PC-9 (cell line): ENCODE measurements at regions of chr15 and their contacts with region 1.

Region 1: DNA sequence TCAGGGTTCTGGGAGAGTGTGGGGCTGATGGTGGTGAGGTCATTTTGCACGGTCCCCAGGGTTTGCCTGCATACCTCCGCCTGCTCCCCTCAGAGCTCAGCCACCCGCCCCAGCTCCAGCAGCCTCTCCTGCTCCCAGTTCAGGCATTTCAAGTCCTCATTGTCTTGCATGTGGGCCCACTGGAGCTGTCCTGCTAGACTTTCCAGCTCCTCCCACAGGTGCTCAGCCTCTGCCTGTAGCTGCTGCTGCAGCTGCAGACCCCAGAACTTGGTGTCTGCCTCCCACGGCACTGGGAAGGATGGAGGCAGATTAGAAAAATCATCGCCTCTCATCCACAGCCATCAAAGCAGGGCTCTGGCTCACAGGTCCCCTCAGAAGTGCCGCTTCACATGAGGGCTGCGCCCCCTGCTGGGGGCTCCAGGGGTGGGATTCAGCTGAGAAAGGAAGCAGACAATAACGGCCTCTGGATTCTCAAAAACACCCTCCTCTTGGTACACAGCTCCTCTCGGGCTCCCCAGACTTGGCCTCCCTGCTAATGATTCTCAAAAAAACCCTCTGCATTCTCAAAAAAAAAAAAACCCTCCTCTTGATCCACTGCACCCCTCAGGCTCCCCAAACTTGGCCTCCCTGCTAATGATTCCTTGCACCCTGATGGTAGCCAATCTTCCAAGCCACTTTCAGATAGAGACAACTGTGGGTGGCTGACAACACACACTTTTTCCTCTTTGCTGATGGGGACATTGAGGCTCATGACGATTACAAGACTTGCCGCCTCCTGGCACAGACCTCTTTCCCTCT is 89.3 kb upstream of the C2CD4B start:
- DNase-seq: peak in 1 of 2 experiments; percentile 63
- H3K4me3 ChIP-seq: no peak overlapping the region
- H3K27ac ChIP-seq: no peak overlapping the region
- H3K4me1 ChIP-seq: no peaks in the 10 kb centered on the region
- H3K27me3 ChIP-seq: no peaks in the 10 kb centered on the region
- CTCF ChIP-seq: peak; percentile 76

Region 2: DNA sequence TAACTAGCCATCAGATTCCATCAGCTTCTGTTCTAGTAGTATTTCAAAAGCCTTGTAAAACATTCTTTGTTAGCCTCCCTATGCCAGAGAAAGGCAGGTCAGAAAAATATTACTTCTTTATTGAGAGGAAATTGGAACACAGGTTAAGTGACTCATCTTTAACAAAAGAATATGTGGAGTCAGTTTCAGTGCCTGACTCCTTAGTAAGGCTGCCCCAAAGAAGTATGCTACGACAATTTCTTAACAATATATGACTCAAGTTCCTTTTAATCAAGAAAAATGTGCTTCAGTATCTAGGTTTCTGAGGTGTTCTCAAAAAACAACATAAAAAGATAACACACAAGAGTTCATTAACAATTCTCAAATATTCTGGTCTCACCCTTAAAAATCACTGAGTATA is 333.2 kb before region 1 on chr15:
- CTCF ChIA-PET with region 1: no interaction called
- POLR2A ChIA-PET with region 1: no interaction called
- intact Hi-C with region 1: loop called (anchors 5 kb)
- DNase-seq: peak in 1 of 2 experiments; percentile 37
- H3K4me3 ChIP-seq: no peak overlapping the region
- H3K27ac ChIP-seq: peak overlapping the region; percentile 26; the same call in 1 of the 2 replicates
- H3K4me1 ChIP-seq: 0 out of 2 replicates have a peak, but pooled peaks cover 4% of the 10 kb centered on the region
- H3K27me3 ChIP-seq: no peaks in the 10 kb centered on the region
- CTCF ChIP-seq: no peak

Region 3: GRCh38 chr15:62066663-62067447 is 187.5 kb before region 1 on chr15 and contains the start of gene C2CD4A:
- CTCF ChIA-PET with region 1: no interaction called
- POLR2A ChIA-PET with region 1: no interaction called
- intact Hi-C with region 1: loop called (anchors 5 kb)
- DNase-seq: peak in 1 of 2 experiments; percentile 72
- H3K4me3 ChIP-seq: no peak within 1 kb of the TSS
- H3K27ac ChIP-seq: no peak within 1 kb of the TSS
- H3K4me1 ChIP-seq: peaks cover 56% of the 10 kb centered on the region
- H3K27me3 ChIP-seq: no peaks in the 10 kb centered on the region
- CTCF ChIP-seq: no peak
- total RNA-seq, gene C2CD4A: 0.09 TPM in 1 of 2 replicates, not detected in the other

Region 4: DNA sequence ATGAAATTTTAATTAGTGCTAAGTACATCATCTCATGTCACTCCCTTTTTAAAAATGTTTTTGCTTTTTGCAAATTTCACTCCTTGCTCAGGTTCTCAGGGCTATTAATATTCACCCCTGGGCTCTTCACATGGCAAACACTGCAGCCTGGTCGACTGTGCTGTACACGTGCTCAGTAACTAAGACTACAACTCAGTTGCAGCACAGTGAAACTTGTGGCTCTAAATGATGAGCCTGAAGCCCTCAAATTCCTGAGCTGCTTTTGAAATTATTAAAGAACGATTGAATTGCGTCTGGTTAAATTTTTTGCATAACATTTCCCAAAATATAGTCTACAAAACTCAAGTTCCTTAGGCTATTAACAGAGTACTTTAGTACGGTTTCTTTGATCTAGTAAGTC is 70.0 kb after region 1 on chr15:
- CTCF ChIA-PET with region 1: no interaction called
- POLR2A ChIA-PET with region 1: no interaction called
- intact Hi-C with region 1: no loop called
- DNase-seq: no peak
- H3K4me3 ChIP-seq: no peak overlapping the region
- H3K27ac ChIP-seq: no peak overlapping the region
- H3K4me1 ChIP-seq: peaks cover 6% of the 10 kb centered on the region
- H3K27me3 ChIP-seq: no peaks in the 10 kb centered on the region
- CTCF ChIP-seq: no peak